Activated CD4-positive, alpha-beta T cell treated with anti-CD3 and anti-CD28 coated beads for 36 hours (primary cell): ENCODE measurements at regions of chr3 and their contacts with region 1.

Region 1: GRCh38 chr3:49093853-49094767 is at the start of gene QRICH1:
- DNase-seq: peak; percentile 98
- ATAC-seq: peak; percentile 86
- H3K4me3 Mint-ChIP-seq: peak within 1 kb of the TSS; percentile 90
- H3K27ac Mint-ChIP-seq: peak within 1 kb of the TSS; percentile 94
- H3K4me1 Mint-ChIP-seq: peaks cover 33% of the 10 kb centered on the region
- H3K27me3 Mint-ChIP-seq: no peaks in the 10 kb centered on the region
- total RNA-seq, gene QRICH1: 119 to 171 TPM

Region 2: GRCh38 chr3:48088749-48089466 is 1005.2 kb before region 1 on chr3:
- CTCF ChIA-PET with region 1: no interaction called
- POLR2A ChIA-PET with region 1: no interaction called
- intact Hi-C with region 1: loop called in 1 of 2 experiments (anchors 5 kb)
- DNase-seq: peak; percentile 97
- ATAC-seq: peak; percentile 96
- H3K4me3 Mint-ChIP-seq: peak overlapping the region; percentile 97
- H3K27ac Mint-ChIP-seq: peak overlapping the region; percentile 93
- H3K4me1 Mint-ChIP-seq: peaks cover 29% of the 10 kb centered on the region
- H3K27me3 Mint-ChIP-seq: no peaks in the 10 kb centered on the region

Region 3: DNA sequence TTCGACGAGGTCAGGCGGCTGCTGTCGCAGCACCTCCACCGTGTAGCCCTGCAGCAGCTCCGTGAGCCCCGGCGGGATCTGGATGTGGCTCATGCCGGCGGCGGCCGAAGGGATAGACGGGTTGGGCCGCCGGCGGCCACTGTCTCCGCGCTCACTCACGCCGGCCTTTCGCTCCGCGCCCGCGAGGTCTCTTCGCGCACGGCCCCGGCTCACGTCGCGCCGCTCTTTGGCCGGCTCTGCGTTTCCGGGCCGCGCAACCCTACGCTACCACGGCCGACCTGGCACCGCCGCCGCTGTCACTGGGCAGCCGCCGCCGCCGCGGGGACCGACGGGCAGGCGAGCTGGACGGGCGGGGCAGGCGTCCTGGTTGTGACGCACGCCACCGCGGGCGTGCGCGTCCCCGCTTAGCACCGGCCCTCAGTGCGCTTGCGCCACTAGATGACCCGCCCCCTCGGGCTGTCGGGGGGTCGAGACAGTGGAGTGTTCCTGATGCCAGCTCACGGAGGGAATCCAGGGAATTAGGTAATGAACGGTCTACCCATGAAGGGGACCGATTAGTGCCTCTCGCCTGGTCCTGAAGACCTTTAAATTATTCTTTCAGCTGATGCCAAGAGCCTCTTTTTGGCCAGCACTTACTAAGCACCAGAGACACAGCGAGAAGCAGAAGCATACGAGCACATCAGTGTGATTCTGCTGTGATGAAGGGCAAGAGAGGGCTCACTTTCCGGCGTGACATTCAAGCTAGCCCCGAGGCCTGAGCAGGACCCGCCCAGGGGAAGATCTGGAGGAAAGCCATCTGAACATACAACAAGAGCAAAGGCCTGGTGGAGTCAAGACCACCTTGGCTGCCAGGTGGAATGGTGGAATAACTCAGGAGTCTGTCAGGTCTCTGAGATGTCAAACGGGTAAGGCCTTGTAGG is 246.3 kb before region 1 on chr3 and contains the start of gene PRKAR2A:
- CTCF ChIA-PET with region 1: no interaction called
- POLR2A ChIA-PET with region 1: no interaction called
- intact Hi-C with region 1: loop called in 1 of 2 experiments (anchors 1 kb)
- DNase-seq: peak; percentile 89
- ATAC-seq: peak; percentile 89
- H3K4me3 Mint-ChIP-seq: peak within 1 kb of the TSS; percentile 82
- H3K27ac Mint-ChIP-seq: peak within 1 kb of the TSS; percentile 87
- H3K4me1 Mint-ChIP-seq: peaks cover 26% of the 10 kb centered on the region
- H3K27me3 Mint-ChIP-seq: no peaks in the 10 kb centered on the region
- total RNA-seq, gene PRKAR2A: 28.7 to 35.2 TPM

Region 4: GRCh38 chr3:49021813-49022687 is 72.1 kb before region 1 on chr3 and contains the start of gene NDUFAF3:
- CTCF ChIA-PET with region 1: interaction called, 6 read pairs
- POLR2A ChIA-PET with region 1: interaction called, 31 read pairs
- intact Hi-C with region 1: loop called (anchors 1 to 2 kb)
- DNase-seq: peak; percentile 96
- ATAC-seq: peak; percentile 78
- H3K4me3 Mint-ChIP-seq: peak within 1 kb of the TSS; percentile 95
- H3K27ac Mint-ChIP-seq: peak within 1 kb of the TSS; percentile 96
- H3K4me1 Mint-ChIP-seq: peaks cover 60% of the 10 kb centered on the region
- H3K27me3 Mint-ChIP-seq: no peaks in the 10 kb centered on the region
- total RNA-seq, gene NDUFAF3: 90.8 to 108 TPM

Region 5: GRCh38 chr3:49133226-49133951 is 39.3 kb after region 1 on chr3:
- CTCF ChIA-PET with region 1: no interaction called
- POLR2A ChIA-PET with region 1: no interaction called
- intact Hi-C with region 1: no loop called
- DNase-seq: no peak
- ATAC-seq: no peak
- H3K4me3 Mint-ChIP-seq: no peak overlapping the region
- H3K27ac Mint-ChIP-seq: no peak overlapping the region
- H3K4me1 Mint-ChIP-seq: peaks cover 6% of the 10 kb centered on the region
- H3K27me3 Mint-ChIP-seq: peaks cover 17% of the 10 kb centered on the region

Region 6: GRCh38 chr3:49165771-49166751 is 72.0 kb after region 1 on chr3 and contains the start of gene CCDC71:
- CTCF ChIA-PET with region 1: interaction called, 6 read pairs
- POLR2A ChIA-PET with region 1: interaction called, 5 read pairs
- intact Hi-C with region 1: loop called in 1 of 2 experiments (anchors 1 kb)
- DNase-seq: peak; percentile 88
- ATAC-seq: peak; percentile 81
- H3K4me3 Mint-ChIP-seq: peak within 1 kb of the TSS; percentile 90
- H3K27ac Mint-ChIP-seq: peak within 1 kb of the TSS; percentile 89
- H3K4me1 Mint-ChIP-seq: peaks cover 39% of the 10 kb centered on the region
- H3K27me3 Mint-ChIP-seq: no peaks in the 10 kb centered on the region
- total RNA-seq, gene CCDC71: 19.5 to 22.2 TPM

Region 7: DNA sequence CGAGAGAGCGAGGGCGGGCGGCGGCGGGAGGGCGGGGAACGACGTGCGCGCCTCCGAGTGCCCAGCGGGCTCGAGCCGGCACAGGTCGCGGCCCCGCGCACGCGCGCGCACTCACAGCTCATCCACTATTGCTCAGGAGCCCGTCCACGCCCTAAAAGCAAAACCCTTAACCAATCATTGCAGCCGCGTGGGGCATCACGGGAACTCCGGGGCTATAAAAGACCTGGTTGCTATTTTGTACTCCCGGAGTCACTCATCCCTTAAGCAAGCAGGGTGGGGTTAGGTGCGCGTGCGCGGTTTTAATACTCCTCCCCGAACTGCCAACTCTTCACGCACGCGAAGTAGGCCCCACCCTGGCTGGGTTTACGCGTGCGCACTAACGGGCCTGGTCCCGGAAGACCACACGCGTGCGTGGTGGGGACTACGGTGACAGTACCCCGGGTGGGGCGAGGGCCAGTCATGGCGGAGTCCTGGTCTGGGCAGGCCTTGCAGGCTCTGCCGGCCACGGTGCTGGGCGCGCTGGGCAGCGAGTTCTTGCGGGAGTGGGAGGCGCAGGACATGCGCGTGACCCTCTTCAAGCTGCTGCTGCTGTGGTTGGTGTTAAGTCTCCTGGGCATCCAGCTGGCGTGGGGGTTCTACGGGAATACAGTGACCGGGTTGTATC is 318.0 kb after region 1 on chr3 and contains the starts of genes RHOA and TCTA:
- CTCF ChIA-PET with region 1: no interaction called
- POLR2A ChIA-PET with region 1: interaction called, 19 read pairs
- intact Hi-C with region 1: loop called (anchors 1 kb)
- DNase-seq: peak; percentile 99
- ATAC-seq: peak; percentile 88
- H3K4me3 Mint-ChIP-seq: peak within 1 kb of the TSS; percentile 97
- H3K27ac Mint-ChIP-seq: peak within 1 kb of the TSS; percentile 97
- H3K4me1 Mint-ChIP-seq: peaks cover 63% of the 10 kb centered on the region
- H3K27me3 Mint-ChIP-seq: no peaks in the 10 kb centered on the region
- total RNA-seq, gene RHOA: 438 to 449 TPM
- total RNA-seq, gene TCTA: 9.4 TPM